H1 (cell line): ENCODE measurements at regions of chr1 and their contacts with region 1.

Region 1: DNA sequence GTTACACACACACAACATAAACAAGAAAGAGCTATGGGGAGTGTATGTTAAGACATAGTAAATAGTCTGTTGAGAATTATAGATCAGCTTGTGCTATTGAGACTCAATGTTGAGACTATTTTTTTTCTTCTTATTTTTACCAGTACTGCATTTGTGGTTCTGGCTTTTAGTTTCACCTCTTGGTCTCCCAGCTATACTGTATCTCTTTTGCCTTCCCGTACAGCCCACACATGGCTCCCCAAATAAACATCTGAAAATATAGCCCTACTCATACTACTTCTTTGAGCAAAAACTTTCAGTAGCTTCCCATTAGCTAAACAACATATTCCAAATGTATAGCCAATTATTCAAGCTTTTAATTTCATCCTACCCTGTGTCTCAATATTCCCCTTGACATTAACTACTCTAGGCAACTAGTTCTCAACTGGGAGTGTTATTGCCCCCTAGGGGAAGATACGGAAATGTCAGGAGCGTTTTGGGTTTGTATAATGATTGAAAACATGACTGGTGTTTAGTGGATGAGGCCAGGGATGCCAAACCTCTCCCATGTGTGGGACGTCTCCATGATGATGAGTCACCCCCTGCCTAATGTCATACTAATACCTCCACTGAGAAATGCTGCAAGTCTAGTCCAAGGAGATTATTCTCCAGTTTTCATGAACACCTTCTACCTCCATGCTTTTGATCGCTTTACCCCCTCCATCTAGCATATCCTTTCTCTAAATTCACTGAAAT is 6.8 kb downstream of the RPE65 start:
- DNase-seq: peak in 1 of 2 experiments; percentile 61
- H3K4me3 ChIP-seq: no peak overlapping the region
- H3K27ac ChIP-seq: no peak overlapping the region
- H3K4me1 ChIP-seq: peaks cover 0 to 2% (median 0%) of the 10 kb centered on the region in 4 experiments; a peak in 2 of 7 replicates
- H3K27me3 ChIP-seq: no peaks in the 10 kb centered on the region
- CTCF ChIP-seq: peak in 2 of 3 experiments; percentile 54 to 72; a peak in 2 of 4 replicates
- EP300 ChIP-seq: no peak
- POLR2A ChIP-seq: no peak
- RAD21 ChIP-seq: peak; percentile 56 to 68

Region 2: GRCh38 chr1:68301471-68302001 is 141.5 kb before region 1 on chr1:
- CTCF ChIA-PET with region 1: no interaction called
- POLR2A ChIA-PET with region 1: no interaction called
- DNase-seq: no peak
- H3K4me3 ChIP-seq: no peak overlapping the region
- H3K27ac ChIP-seq: no peak overlapping the region
- H3K4me1 ChIP-seq: no peaks in the 10 kb centered on the region
- H3K27me3 ChIP-seq: peaks cover 0 to 10% (median 7%) of the 10 kb centered on the region in 4 experiments; a peak in 6 of 7 replicates
- CTCF ChIP-seq: no peak
- EP300 ChIP-seq: no peak
- POLR2A ChIP-seq: no peak
- RAD21 ChIP-seq: no peak

Region 3: DNA sequence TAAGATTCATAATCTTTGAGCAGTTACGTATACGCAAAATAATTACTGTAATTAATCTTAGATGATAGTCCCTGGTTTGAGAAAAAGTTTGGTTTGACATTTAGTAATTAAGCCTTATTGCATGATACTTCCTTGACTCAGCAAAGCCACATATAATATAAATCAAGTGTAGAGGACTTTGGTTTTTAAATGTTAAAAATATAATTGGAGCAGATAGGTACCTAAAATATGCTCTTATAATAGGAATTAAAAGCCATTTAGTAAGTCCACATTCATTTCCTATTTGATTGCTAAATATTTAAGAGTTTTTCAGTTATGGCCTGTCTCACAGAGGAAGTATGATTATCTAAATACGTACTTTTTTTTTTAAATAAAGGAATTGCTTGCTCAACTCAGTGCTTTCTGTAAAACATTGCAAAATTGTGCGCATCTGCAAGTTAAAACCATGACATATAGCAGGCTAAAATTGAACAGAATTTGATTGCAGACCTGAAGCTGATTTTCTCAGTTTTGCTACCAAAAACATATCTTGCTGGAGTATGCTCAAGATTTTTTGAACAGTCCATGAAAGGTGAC is 13.7 kb before region 1 on chr1:
- CTCF ChIA-PET with region 1: interaction called, 13 read pairs
- POLR2A ChIA-PET with region 1: no interaction called
- DNase-seq: no peak
- H3K4me3 ChIP-seq: no peak overlapping the region
- H3K27ac ChIP-seq: no peak overlapping the region
- H3K4me1 ChIP-seq: no peaks in the 10 kb centered on the region
- H3K27me3 ChIP-seq: no peaks in the 10 kb centered on the region
- CTCF ChIP-seq: no peak
- EP300 ChIP-seq: no peak
- POLR2A ChIP-seq: no peak
- RAD21 ChIP-seq: no peak

Region 4: DNA sequence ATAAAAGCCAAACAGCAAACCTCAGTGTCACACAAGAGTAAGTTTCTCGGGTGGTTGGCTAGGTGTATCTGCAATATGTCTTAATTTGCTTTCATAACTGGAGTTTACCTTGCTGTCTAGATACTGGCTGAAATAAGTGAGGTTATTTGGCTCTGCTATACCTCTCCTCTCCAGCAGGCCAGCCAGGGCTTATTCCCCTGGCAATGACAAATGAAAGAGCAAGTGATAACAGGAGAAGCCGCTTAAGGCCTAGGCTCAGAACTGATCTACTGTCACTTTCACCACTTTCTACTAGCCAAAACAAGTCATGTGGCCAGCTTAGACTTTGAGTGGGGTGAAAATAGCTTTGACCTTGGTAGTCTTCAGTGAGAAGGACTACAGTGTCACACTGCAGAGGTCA is 11.5 kb after region 1 on chr1:
- CTCF ChIA-PET with region 1: interaction called, 60 read pairs
- POLR2A ChIA-PET with region 1: no interaction called
- DNase-seq: no peak
- H3K4me3 ChIP-seq: no peak overlapping the region
- H3K27ac ChIP-seq: no peak overlapping the region
- H3K4me1 ChIP-seq: peaks cover 0 to 2% (median 0%) of the 10 kb centered on the region in 4 experiments; a peak in 1 of 7 replicates
- H3K27me3 ChIP-seq: no peaks in the 10 kb centered on the region
- CTCF ChIP-seq: peak in 1 of 3 experiments; percentile 49; a peak in 1 of 4 replicates
- EP300 ChIP-seq: no peak
- POLR2A ChIP-seq: no peak
- RAD21 ChIP-seq: peak in 1 of 2 experiments; percentile 20; a peak in 1 of 4 replicates

Region 5: DNA sequence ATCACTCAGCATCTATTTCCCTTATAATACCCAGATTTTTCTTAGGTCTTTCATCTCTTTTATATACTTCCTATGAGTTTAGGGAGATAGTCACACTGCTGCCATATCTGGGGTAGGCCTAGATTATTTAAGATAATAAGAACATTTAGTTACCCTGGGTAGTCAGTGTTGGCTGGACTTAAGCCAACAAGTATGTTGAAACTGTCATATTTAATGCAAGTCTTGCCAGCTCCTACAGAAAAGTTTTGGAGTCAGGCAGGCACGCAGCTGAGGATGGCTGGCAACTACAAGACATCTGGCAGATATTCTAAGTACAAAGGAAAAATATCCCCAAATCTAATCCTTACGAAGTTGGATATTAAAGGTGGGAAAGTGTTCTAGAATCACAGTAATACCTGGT is 73.1 kb after region 1 on chr1:
- CTCF ChIA-PET with region 1: no interaction called
- POLR2A ChIA-PET with region 1: no interaction called
- DNase-seq: no peak
- H3K4me3 ChIP-seq: no peak overlapping the region
- H3K27ac ChIP-seq: no peak overlapping the region
- H3K4me1 ChIP-seq: no peaks in the 10 kb centered on the region
- H3K27me3 ChIP-seq: no peaks in the 10 kb centered on the region
- CTCF ChIP-seq: no peak
- EP300 ChIP-seq: no peak
- POLR2A ChIP-seq: no peak
- RAD21 ChIP-seq: no peak